GM12878 (cell line): ENCODE measurements at regions of chr20 and their contacts with region 1.

Region 1: DNA sequence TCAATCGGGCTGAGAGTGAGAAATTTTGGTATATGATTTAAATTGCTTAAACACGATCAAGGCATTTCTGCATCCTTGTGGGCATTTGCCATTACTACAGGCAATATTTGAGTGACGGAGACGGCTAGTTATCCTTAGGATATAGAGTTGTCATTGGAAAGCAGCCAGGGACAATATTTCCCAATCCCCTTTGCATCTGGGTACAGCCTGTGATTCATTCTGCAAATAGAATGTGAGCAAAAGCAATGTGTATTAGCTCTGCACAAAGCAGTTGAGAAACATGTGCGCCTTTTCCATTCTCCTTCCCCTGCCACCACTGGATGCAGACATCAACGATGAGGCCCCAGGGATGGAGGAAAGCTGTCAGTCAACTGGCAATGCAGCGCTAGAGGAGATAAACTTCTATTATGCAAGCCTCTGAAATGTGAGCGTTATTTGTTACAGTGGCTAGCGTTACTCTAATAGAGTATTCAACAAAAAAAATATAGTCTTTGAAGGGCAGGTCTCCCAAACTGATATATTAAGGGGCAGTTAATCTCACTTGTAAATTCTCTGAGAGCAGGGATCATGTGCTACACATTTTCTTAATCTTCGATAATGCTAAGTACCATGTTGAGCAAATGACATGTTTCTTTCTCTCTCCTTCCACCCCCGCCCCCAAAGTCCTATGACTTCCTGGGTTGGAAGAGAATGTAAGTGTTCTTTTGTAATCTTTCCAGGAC is 37.1 kb upstream of the NCOA3 start:
- DNase-seq: no peak
- ATAC-seq: no peak
- H3K4me3 ChIP-seq: no peak overlapping the region
- H3K27ac ChIP-seq: no peak overlapping the region
- H3K4me1 ChIP-seq: peaks cover 27% of the 10 kb centered on the region
- H3K27me3 ChIP-seq: no peaks in the 10 kb centered on the region
- CTCF ChIP-seq: no peak
- EP300 ChIP-seq: no peak
- POLR2A ChIP-seq: no peak
- RAD21 ChIP-seq: no peak

Region 2: DNA sequence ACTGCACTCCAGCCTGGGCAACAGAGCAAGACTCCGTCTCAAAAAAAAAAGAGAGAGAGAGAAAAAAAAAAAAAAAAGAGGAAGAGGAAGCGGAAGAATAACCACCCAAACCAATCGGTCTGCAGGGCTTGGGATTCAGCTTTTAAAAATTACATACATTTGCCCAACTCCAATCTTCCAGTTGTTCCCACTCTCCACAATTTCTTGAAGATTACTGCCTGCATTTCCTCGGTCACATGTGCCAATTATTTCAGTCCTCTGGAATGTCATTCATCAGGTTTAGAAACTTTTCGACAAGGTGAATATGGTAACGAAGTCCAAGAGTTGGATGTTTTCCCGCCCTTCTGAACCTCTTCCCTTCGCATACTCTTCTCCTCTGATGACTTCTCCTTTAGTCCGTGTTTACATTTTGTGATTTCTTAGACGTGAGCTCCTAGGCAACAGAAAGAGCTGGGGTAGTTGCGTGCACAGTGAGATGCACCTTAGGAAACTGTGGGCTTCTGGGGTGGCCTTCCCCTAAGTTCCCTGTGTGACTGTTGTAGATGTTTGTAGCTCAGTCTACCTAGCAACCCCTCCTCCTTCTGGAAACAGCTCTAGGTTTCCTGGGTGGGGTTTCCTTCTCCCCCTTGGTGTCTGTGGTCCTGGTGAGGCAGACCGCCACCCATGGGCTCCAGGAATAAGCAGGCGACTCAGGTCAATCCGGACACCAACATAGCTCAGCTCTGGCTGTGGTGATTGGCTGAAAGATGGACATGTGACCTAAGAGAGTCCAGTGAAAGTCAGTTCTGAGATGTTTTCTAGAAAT is 25.8 kb before region 1 on chr20:
- CTCF ChIA-PET with region 1: no interaction called
- POLR2A ChIA-PET with region 1: interaction called, 3 read pairs
- RAD21 ChIA-PET with region 1: no interaction called
- SMC1A ChIA-PET with region 1: interaction called, 10 read pairs
- in situ Hi-C with region 1: no loop called
- intact Hi-C with region 1: no loop called
- DNase-seq: peak; percentile 75
- ATAC-seq: peak; percentile 75
- H3K4me3 ChIP-seq: peak overlapping the region; percentile 39; the same call in 1 of the 2 replicates
- H3K27ac ChIP-seq: peak overlapping the region; percentile 91
- H3K4me1 ChIP-seq: peaks cover 19% of the 10 kb centered on the region
- H3K27me3 ChIP-seq: no peaks in the 10 kb centered on the region
- CTCF ChIP-seq: no peak
- EP300 ChIP-seq: peak; percentile 32 to 78; a peak in 3 of 4 replicates
- POLR2A ChIP-seq: no peak; the same call in 1 of the 2 replicates
- RAD21 ChIP-seq: no peak

Region 3: DNA sequence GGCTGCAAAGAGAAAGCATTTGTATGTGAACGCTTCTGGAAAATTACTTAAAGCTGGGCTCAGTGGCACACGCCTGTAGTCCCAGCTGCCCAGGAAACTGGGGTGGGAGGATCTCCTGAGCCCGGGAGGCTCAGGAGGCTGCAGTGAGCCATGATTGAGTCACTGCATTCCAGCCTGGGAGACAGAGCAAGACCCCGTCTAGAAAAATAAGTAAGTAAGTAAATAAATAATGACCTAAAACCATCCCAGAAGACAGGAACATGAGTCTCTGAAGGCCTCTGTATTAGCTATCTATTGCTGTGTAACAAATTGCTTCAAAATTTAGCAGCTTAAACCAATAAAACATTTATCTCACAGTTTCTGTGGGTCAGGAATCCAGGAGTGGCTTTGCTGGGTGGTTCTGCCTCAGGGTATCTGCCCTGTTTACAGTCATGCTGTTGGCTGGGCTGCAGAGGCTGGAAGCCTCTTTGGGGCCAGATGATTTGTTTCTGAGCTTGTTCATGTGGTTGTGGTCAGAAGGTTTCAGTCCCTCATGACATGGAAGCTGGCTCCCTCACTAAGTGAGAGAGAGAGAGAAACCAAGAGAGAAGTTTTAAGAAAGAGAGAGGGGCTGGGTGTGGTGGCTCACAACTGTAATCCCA is 11.3 kb before region 1 on chr20:
- CTCF ChIA-PET with region 1: interaction called, 9 read pairs
- POLR2A ChIA-PET with region 1: interaction called, 23 read pairs
- RAD21 ChIA-PET with region 1: interaction called, 9 read pairs
- SMC1A ChIA-PET with region 1: interaction called, 30 read pairs
- in situ Hi-C with region 1: no loop called
- intact Hi-C with region 1: no loop called
- DNase-seq: peak; percentile 92
- ATAC-seq: peak; percentile 98
- H3K4me3 ChIP-seq: peak overlapping the region; percentile 36; the same call in 1 of the 2 replicates
- H3K27ac ChIP-seq: peak overlapping the region; percentile 87
- H3K4me1 ChIP-seq: peaks cover 31% of the 10 kb centered on the region
- H3K27me3 ChIP-seq: no peaks in the 10 kb centered on the region
- CTCF ChIP-seq: no peak
- EP300 ChIP-seq: peak; percentile 27 to 28; a peak in 2 of 4 replicates
- POLR2A ChIP-seq: peak; percentile 27; the same call in 1 of the 2 replicates
- RAD21 ChIP-seq: 0 out of 2 replicates have a peak, but pooled peaks have one; percentile 14

Region 4: DNA sequence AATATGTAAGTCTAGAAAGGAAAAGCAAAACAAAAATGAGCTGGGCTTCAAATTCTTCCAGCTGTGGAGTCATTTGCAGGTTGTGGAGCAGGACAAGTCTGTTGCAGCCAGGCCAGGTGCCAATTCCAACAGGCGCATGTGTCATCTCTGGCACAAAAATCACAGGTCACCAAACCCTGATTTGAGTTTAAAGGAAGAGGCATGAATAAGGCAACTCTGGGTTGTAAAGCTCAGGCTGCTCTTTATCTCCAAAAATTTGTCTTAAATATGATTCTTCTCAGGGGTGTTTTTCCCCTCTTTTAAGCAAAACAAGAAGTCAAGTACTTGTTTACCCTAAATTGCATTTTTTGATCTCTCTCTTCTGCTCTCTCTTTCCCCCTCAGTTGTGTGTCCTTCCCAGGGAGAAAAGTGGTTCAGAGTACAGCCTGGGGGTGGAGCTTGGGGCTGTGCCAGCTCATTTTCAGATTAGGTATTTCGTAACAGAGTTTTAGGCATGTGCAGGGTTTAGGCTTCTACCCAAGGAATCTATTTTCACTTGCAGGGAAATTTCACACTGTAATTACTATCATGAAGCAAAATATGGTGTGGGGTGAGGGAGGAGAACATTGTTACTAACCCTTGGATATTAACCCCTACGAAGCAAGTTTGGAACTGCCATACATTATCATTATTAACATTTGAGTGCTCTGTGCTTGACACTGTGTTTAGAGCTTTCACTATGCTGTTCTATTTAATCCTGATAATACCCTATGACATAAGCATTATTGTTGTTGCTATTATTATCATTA is 28.8 kb after region 1 on chr20:
- CTCF ChIA-PET with region 1: interaction called, 5 read pairs
- POLR2A ChIA-PET with region 1: interaction called, 13 read pairs
- RAD21 ChIA-PET with region 1: interaction called, 18 read pairs
- SMC1A ChIA-PET with region 1: interaction called, 134 read pairs
- in situ Hi-C with region 1: no loop called
- intact Hi-C with region 1: no loop called
- DNase-seq: no peak
- ATAC-seq: peak; percentile 48
- H3K4me3 ChIP-seq: peak overlapping the region; percentile 19
- H3K27ac ChIP-seq: peak overlapping the region; percentile 82
- H3K4me1 ChIP-seq: peaks cover 81% of the 10 kb centered on the region
- H3K27me3 ChIP-seq: no peaks in the 10 kb centered on the region
- CTCF ChIP-seq: no peak
- EP300 ChIP-seq: no peak
- POLR2A ChIP-seq: no peak
- RAD21 ChIP-seq: no peak

Region 5: GRCh38 chr20:47540443-47541354 is 76.2 kb after region 1 on chr20:
- CTCF ChIA-PET with region 1: no interaction called
- POLR2A ChIA-PET with region 1: no interaction called
- RAD21 ChIA-PET with region 1: no interaction called
- SMC1A ChIA-PET with region 1: no interaction called
- in situ Hi-C with region 1: no loop called
- intact Hi-C with region 1: no loop called
- DNase-seq: peak; percentile 21
- ATAC-seq: peak; percentile 22; the same call in 2 of the 3 replicates
- H3K4me3 ChIP-seq: no peak overlapping the region
- H3K27ac ChIP-seq: no peak overlapping the region
- H3K4me1 ChIP-seq: peaks cover 35% of the 10 kb centered on the region
- H3K27me3 ChIP-seq: no peaks in the 10 kb centered on the region
- CTCF ChIP-seq: no peak
- EP300 ChIP-seq: no peak
- POLR2A ChIP-seq: no peak
- RAD21 ChIP-seq: no peak